ENCODE measurements at regions of chr10 and their contacts with region 1.

Region 1: DNA sequence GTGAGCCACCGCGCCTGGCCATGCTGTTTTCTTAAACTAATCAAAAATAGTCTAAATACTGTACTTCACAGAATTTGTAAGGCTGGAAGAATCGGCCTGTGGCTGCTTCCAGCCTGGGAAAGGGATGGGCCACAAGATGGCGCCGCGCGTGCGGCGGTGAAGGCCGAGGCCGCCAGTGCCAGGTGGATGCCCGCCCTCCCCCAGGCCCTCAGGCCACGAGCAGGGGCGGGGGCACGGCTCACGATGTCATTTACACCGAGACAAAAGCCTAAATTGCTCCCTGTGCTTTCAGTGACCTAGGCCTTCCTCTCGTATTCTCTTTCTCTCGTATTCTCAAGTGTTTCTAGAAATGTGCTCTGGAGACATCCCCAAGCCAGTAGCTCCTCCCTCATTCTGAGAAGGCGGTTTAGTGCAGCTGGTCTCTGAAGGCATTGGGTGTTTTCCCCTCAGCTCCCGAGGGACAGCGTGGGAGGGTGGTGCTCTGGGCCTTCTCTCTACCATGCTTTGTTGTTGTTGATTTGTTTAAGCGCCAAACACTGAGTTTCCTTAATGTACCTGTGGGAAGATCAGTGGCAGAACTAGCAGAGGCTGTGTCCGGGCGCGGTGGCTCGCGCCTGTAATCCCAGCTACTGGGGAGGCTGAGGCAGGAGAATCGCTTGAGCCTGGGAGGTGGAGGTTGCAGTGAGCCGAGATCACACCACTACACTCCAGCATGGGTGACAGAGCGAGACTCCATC is 68.4 kb downstream of the CDC123 start:
- DNase-seq: peak; percentile 67
- H3K4me3 ChIP-seq: peak overlapping the region; percentile 15 to 39 (median 19)
- H3K27ac ChIP-seq: no peak overlapping the region
- H3K4me1 ChIP-seq: peaks cover 3% of the 10 kb centered on the region
- H3K27me3 ChIP-seq: no peaks in the 10 kb centered on the region
- CTCF ChIP-seq: peak; percentile 67 to 89

Region 2: GRCh38 chr10:12299222-12299965 is 35.0 kb after region 1 on chr10:
- CTCF ChIA-PET with region 1: no interaction called
- dilution Hi-C with region 1: no loop called
- in situ Hi-C with region 1: no loop called
- intact Hi-C with region 1: no loop called
- DNase-seq: no peak
- H3K4me3 ChIP-seq: no peak overlapping the region
- H3K27ac ChIP-seq: no peak overlapping the region
- H3K4me1 ChIP-seq: no peaks in the 10 kb centered on the region
- H3K27me3 ChIP-seq: no peaks in the 10 kb centered on the region
- CTCF ChIP-seq: no peak

Region 3: GRCh38 chr10:12348870-12349628 is 84.7 kb after region 1 on chr10 and contains the start of gene CAMK1D:
- CTCF ChIA-PET with region 1: interaction called, 22 read pairs
- dilution Hi-C with region 1: no loop called
- in situ Hi-C with region 1: no loop called
- intact Hi-C with region 1: loop called (anchors 2 kb)
- DNase-seq: peak; percentile 62
- H3K4me3 ChIP-seq: peak within 1 kb of the TSS; percentile 9 to 58 (median 56)
- H3K27ac ChIP-seq: no peak within 1 kb of the TSS
- H3K4me1 ChIP-seq: peaks cover 11% of the 10 kb centered on the region
- H3K27me3 ChIP-seq: no peaks in the 10 kb centered on the region
- CTCF ChIP-seq: no peak
- total RNA-seq, gene CAMK1D: 0.50 to 1.5 TPM

Region 4: DNA sequence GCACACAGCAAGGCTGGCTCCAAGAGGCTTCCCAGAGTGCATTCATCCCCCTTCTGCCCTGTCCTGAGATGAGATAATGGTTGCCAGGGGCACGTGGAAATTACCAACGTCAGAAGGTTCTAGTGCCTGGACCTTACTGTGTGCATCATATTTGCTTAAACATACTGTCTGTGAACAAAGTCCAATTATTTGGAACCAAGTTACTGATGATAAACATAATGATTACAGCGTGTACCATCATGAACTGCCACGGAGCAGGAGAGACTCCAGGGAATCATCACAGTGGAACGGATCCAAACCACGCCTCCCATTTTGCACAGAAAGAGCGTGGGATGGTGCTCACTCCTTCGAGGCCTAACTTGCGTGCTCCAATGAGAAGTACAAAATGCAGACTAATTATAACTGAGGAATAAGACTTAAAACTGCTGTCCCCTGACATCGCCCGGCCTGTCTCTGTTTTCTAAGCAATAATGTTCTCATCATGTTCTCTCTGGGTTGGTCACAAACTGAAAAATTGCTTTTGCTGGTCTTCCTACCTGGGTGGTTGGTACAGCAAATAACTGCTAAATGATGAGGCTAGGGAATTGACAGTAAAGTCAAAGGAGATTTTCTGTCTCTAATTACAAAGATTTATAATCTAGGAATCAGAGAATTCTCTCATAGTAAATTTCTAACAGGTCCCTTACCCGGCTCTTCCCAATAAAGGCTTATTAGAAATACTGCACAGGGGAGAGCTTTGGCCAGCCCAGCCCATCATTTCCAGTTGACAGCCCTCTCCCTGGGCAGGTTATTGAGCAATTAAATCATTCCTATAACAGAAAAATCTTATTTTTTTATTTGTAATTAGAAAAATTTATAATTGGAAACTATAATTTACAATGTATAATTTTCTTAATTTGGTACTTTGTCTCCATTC is 267.2 kb after region 1 on chr10:
- CTCF ChIA-PET with region 1: no interaction called
- dilution Hi-C with region 1: no loop called
- in situ Hi-C with region 1: no loop called
- intact Hi-C with region 1: no loop called
- DNase-seq: no peak
- H3K4me3 ChIP-seq: no peak overlapping the region
- H3K27ac ChIP-seq: no peak overlapping the region
- H3K4me1 ChIP-seq: no peaks in the 10 kb centered on the region
- H3K27me3 ChIP-seq: no peaks in the 10 kb centered on the region
- CTCF ChIP-seq: no peak

Region 5: DNA sequence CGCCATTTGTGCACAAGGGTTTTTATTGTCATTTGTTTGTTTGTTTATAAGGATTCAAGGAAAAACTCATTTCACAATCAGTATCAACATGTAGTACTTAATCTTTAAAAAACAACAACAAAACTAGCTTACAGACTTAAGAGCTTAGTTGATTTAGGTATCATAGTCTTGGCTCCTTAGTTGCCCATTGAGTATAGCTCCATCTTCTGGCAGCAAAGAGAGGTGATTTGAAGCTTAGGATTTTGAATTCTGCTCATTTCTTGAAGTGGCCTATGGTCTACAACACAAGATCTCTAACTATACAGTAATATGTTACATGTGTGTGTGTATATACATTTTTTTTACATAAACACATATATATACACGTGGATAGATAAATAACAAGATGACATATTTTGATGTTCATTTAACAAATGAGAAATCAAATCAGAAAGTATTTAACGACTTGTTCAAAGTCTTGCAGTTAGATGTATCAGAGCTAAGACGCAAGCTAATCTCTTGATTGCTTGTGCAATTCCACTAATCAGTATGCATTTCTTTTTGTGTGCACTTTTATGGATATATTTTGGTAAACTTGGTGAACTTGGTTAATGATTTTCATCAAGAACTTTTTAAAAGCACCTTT is 392.3 kb after region 1 on chr10:
- CTCF ChIA-PET with region 1: interaction called, 16 read pairs
- dilution Hi-C with region 1: no loop called
- in situ Hi-C with region 1: loop called in 1 of 2 experiments (anchors 10 kb)
- intact Hi-C with region 1: loop called (anchors 1 kb)
- DNase-seq: peak; percentile 39
- H3K4me3 ChIP-seq: no peak overlapping the region
- H3K27ac ChIP-seq: no peak overlapping the region
- H3K4me1 ChIP-seq: no peaks in the 10 kb centered on the region
- H3K27me3 ChIP-seq: no peaks in the 10 kb centered on the region
- CTCF ChIP-seq: peak; percentile 69 to 81

Region 6: DNA sequence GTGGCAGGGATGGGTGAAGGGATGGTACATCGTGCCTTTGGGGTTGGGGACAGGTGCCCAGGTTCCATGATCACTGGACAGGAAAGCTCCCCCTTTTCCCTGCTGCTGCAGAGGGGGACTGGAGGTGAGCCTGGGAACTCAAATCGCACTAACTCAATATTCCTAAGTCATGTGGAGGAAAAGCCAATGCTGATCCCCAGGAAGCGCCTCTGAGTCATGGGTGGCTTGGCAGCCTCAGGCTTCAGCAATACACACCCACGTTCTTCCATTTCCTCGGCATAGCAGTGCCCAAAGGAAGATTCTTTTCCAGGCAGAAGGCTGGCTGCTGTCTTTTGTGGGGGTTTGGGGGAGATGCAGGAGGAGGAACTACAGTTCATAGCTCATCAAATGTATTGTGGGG is 571.3 kb after region 1 on chr10:
- CTCF ChIA-PET with region 1: no interaction called
- dilution Hi-C with region 1: no loop called
- in situ Hi-C with region 1: no loop called
- intact Hi-C with region 1: no loop called
- DNase-seq: peak; percentile 63
- H3K4me3 ChIP-seq: no peak overlapping the region
- H3K27ac ChIP-seq: no peak overlapping the region
- H3K4me1 ChIP-seq: no peaks in the 10 kb centered on the region
- H3K27me3 ChIP-seq: no peaks in the 10 kb centered on the region
- CTCF ChIP-seq: no peak

Measured in mammary epithelial cell (primary cell).